ENCODE measurements at regions of chr4 and their contacts with region 1.

Region 1: GRCh38 chr4:25654971-25655963 is at the start of gene SLC34A2:
- DNase-seq: peak; percentile 78 to 87
- H3K4me3 ChIP-seq: peak within 1 kb of the TSS; percentile 40
- H3K4me3 Mint-ChIP-seq: peak within 1 kb of the TSS; percentile 84
- H3K27ac Mint-ChIP-seq: peak within 1 kb of the TSS; percentile 84
- H3K4me1 ChIP-seq: peaks cover 29% of the 10 kb centered on the region
- H3K4me1 Mint-ChIP-seq: peaks cover 25% of the 10 kb centered on the region
- H3K27me3 ChIP-seq: no peaks in the 10 kb centered on the region
- H3K27me3 Mint-ChIP-seq: no peaks in the 10 kb centered on the region
- CTCF ChIP-seq: peak in 1 of 2 experiments; percentile 25
- total RNA-seq, gene SLC34A2: 13.6 and 19.9 TPM in 2 replicates

Region 2: DNA sequence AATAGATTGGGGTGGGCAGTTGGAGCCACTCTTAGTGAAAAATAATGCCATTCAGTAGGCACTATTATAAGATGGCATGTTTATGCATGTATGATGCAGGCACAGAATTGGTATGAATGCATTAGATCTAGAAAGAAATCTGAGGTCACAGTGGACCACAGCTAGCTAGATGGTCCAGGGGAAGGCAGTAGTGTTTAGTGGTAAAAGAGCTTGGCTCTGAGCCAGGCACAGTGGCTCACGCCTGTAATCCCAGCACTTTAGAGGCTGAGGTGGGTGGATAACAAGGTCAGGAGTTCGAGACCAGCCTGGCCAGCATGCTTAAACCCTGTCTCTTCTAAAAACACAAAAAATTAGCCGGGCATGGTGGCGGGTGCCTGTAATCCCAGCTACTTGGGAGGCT is 42.8 kb before region 1 on chr4:
- CTCF ChIA-PET with region 1: no interaction called
- POLR2A ChIA-PET with region 1: no interaction called
- intact Hi-C with region 1: no loop called
- DNase-seq: no peak
- H3K4me3 ChIP-seq: no peak overlapping the region
- H3K4me3 Mint-ChIP-seq: no peak overlapping the region
- H3K27ac Mint-ChIP-seq: no peak overlapping the region
- H3K4me1 ChIP-seq: no peaks in the 10 kb centered on the region
- H3K4me1 Mint-ChIP-seq: no peaks in the 10 kb centered on the region
- H3K27me3 ChIP-seq: no peaks in the 10 kb centered on the region
- H3K27me3 Mint-ChIP-seq: no peaks in the 10 kb centered on the region
- CTCF ChIP-seq: no peak

Region 3: DNA sequence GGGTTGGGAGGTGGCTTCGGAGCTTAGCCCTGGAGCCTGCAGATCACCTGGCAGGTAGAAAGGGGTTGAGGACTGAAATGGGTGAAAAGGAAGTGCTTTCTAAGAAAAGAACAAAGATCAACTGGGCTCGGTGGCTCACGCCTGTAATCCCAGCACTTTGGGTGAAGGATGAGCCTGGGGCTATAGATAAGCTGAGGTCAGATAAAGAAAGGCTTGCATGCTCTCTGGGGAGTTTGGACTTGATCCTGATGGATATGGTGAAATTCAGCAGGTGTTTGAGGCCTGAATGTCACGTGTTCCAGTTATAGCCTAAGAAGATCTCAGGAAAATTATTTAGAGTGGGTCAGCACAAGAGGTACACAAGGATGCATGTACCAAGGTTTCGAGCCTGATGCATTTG is 41.1 kb after region 1 on chr4:
- CTCF ChIA-PET with region 1: no interaction called
- POLR2A ChIA-PET with region 1: no interaction called
- intact Hi-C with region 1: loop called (anchors 5 kb)
- DNase-seq: peak; percentile 57 to 62
- H3K4me3 ChIP-seq: no peak overlapping the region
- H3K4me3 Mint-ChIP-seq: no peak overlapping the region
- H3K27ac Mint-ChIP-seq: no peak overlapping the region
- H3K4me1 ChIP-seq: peaks cover 19% of the 10 kb centered on the region
- H3K4me1 Mint-ChIP-seq: peaks cover 23% of the 10 kb centered on the region
- H3K27me3 ChIP-seq: no peaks in the 10 kb centered on the region
- H3K27me3 Mint-ChIP-seq: no peaks in the 10 kb centered on the region
- CTCF ChIP-seq: no peak